Right ventricle myocardium superior (tissue), 1 donor: ENCODE measurements at regions of chr3 and their contacts with region 1.

Region 1: GRCh38 chr3:108914774-108915641 is 38.7 kb downstream of the GUCA1C start:
- DNase-seq: no peak
- ATAC-seq: peak; percentile 67

Region 2: DNA sequence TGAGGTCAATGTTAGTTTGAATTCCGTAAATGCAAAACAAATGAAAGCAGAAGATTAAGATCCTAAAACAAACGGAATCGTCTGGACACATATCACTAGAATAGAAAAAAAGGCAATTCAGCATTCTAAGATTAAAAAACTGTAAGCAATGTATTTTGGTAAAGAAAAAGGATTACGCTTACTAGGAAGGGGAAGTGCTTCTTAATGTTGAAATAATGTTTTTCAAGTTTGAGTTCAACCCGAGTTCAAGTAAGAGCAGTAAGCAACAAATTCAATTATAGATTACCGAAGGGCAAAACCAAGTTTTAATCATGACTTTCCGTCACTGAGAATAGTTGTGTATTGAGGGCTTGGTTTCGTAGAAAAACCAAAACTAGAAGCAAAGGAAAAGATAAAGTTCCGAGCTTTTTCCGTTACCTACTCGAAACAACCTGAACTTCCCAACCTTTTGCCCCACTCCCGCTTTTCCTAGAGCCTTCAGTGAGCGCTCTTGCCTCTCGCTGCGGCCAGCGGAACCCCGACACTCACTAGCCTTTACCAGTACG is 326.3 kb before region 1 on chr3:
- intact Hi-C with region 1: no loop called
- DNase-seq: no peak
- ATAC-seq: no peak

Region 3: GRCh38 chr3:108669208-108669607 is 245.8 kb before region 1 on chr3:
- intact Hi-C with region 1: loop called (anchors 5 kb)
- DNase-seq: no peak
- ATAC-seq: no peak

Region 4: DNA sequence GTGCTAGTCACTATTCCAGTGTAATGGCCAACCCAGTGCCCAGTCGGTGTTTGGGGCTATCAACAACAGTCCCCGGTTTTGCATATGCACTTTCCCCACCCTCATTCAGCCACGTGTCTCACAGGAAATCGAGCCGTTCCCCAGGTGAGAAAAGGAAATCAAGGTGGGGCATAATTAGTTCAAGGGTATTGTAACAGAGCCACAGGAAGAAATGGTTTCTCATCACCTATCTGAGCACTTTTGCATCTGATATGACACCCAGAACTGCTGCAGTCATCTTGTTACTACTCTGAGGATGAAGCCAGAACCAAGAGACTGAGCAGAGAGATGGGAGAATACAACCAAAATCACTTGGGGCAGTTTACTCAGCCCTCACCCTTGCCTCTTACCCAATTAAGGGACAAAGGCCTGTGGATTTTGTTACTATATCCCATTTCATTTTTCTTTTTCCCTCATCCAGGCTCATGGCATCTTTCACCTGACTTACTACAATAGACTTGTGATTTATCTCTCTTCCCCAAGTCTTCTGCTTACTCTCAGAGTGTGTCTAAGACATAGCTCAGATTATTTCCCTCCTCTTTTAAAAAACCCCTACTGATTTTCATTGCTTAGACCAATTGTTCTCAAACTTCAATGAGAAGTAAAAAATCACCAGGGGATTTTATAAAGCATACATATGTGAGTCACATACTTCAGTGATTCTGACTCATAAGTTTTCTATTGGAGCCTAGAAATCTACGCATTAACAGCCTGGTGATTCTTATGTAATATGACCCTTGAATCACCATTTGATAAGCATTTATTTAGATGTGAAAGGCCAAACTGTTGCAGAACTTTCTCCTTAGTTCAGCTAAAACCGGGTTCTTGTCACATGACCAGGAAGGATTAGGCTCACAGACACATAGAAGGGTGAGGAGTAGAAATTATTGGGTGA is 51.9 kb before region 1 on chr3:
- intact Hi-C with region 1: no loop called
- DNase-seq: no peak
- ATAC-seq: no peak